ENCODE measurements at regions of chr16 and their contacts with region 1.

Region 1: GRCh38 chr16:81006814-81007696 is at the starts of genes CENPN and CMC2:
- DNase-seq: peak; percentile 97 to 100 (median 99)

Region 2: GRCh38 chr16:81035398-81035974 is 28.4 kb after region 1 on chr16 and contains the start of gene ATMIN:
- intact Hi-C with region 1: loop called (anchors 1 kb)
- DNase-seq: peak; percentile 61 to 97 (median 77)

Region 3: DNA sequence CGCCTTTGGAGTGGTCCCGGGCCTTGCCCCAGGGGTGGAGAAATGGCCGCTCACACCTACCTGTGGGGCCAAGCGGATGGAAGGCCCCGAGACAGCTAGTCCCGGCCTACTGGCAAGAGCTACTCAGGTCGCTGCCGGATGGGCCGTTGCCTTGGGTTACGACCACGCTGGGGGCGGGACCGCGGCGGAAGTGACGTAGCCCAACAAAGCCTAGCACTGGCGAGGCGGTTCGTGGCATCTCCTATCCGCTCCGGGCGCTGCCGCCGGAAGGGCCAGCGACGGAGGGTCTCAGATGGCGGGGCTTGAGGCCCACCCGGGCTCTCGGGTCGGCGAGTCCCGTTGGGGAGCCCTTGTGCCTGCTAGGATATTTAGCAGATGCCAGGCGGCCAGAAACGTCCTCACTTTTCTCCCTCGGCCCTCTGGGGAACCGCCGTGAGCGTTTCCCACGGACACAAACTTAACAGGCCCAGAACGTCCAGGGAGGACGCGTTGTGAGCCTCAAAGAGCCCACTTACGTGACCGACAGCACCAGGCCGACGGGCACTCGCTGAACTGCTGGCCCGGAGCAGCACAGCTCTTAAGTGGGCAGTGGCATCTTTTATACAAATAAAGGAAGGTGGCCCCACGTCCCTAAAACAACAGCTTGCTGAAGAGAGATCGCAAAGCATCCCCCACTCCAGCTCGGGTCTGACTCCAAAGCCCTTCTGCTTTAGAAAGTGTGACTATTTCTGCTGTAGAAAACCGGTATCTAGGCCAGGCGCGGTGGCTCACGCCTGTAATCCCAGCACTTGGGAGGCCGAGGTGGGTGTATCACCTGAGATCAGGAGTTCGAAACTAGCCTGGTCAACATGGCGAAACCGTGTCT is 70.3 kb after region 1 on chr16 and contains the start of gene C16orf46:
- intact Hi-C with region 1: loop called (anchors 2 kb)
- DNase-seq: peak; percentile 98 to 100 (median 99)

Region 4: DNA sequence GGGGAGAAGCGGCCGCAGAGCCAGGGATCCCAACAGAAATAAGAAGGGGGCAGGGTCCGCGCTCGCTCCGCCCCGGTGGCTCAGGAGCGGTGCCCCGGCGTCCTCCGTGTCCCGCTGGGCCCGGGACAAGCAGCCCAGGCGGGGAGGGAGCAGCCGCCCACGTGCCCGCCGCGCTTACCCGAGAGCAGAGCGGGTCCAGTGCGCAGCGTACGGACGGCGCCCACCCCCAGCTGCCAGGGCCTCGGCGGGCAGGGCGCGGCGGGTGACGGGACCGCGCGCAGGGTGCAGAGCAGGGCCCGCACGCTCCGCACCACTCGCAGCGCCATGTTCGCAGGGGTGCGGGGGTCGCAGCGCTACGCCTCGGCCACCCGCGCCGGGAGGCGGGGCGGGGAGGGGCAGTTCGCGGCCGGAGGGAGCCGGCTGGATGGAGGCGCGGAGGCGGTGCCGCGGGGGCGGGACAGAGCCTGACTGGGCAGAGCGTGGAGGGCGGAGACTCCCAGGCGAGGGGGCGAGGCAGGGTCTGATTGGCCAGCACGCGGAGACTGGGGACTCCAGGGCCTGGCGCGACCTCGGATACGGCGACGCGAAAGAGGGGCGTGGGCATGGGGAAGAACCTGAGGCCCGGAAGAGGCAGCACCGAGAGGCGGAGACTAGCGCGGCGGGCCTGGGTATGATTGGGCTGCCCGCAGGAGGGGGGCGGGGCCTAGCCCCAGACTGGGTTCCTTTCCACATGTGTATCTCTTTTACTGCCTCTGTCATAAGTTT is 89.1 kb after region 1 on chr16 and contains the start of gene GCSH:
- intact Hi-C with region 1: no loop called
- DNase-seq: peak; percentile 98 to 100 (median 100)

Region 5: DNA sequence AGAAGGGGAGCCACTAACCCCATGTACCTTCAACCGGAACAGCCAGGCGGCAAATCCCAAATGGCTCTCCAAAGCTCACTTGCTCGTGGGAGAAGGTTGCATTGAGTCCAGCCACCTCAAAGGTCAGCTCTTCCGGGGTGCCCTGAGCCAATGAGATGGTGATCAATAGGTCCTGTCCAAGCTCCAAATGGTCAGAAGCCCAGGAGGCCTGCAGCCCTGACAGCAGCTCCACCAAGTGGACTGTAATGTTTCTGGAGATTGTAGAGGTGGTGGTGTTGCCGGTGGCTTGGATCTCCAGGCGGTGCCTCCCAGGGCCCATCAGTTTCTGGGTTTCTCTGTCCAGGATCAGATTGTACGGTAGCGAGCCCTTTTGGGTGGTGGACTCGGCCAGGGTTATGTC is 191.6 kb after region 1 on chr16:
- intact Hi-C with region 1: loop called (anchors 1 kb)
- DNase-seq: peak in 3 of 10 donors; percentile 10 to 87 (median 34)

Region 6: DNA sequence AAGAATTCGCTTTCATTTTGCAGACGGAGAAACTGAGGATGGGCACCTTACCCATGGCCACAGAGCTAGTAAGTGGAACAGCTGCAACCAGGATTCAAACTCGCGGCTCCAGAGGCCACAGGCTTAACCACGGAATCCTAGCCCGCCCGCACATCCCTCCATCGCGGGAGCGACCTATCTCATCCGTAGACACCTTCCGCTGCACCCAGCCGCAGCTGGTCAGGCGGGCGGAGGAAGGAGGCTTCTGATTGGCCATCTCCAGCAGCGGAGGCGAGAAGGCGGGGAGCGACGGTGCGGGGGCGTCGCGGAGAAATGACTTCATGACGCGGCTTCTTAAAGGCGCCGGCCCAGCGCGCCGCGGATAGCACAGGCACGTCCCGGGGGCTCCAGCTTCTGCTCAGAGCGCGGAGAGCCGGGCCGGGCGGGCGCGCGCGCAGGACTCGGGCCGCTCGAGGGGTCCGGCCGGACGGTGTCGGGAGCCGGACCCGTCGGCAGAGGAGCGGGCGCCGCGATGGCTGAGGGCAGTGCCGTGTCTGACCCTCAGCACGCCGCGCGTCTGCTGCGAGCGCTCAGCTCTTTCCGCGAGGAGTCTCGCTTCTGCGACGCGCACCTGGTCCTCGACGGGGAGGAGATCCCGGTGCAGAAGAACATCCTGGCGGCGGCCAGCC is 307.7 kb after region 1 on chr16 and contains the start of gene GAN:
- intact Hi-C with region 1: loop called (anchors 10 kb)
- DNase-seq: peak; percentile 94 to 99 (median 96)